ENCODE measurements at regions of chr10 and their contacts with region 1.

Region 1: DNA sequence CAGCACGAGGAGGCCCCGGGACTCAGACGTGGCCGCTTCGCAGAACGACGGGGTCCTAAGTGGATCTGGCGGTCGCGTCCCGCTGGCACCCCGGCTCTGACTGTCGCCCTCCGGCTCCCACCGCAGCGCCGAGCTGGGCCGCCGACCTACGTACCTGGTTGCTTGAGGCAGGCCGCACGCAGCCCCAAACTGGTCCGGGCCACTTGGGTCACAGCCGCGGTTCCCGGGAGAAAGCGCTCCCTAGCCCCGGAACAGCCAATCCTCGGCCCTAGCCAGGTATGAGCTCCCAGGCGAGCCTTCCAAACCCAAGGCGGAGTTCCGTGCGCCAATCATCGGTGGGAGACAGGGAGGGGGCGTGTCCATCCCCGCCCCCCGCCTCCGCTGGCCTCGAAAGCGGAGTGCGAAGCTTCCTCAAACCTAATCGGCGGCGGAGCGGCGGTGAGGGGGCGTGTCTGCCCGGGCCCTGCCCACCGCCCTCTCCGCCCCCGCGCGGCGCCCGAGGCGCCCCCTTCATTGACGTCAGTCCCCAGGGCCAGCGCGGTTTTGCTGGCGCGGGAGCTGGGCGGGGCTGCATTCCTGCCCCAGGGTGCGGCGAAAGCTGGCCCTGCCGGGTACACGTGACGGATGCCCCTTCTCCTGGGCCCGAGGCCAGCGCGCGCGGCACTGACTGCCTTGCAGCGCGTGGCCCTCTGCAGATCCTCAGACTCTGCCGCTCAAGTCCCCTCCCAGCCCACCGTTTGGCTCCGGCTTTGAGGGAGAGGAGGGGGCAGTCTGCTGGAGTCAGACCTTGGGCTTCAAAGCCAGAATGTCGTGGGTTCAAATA is at the start of gene AVPI1:
- DNase-seq: peak; percentile 92
- H3K4me3 Mint-ChIP-seq: peak within 1 kb of the TSS; percentile 78
- H3K27ac Mint-ChIP-seq: peak within 1 kb of the TSS; percentile 68
- H3K4me1 Mint-ChIP-seq: peaks cover 14% of the 10 kb centered on the region
- H3K27me3 Mint-ChIP-seq: peaks cover 14% of the 10 kb centered on the region
- total RNA-seq, gene AVPI1: 0.66 and 0.93 TPM in 2 replicates

Region 2: GRCh38 chr10:97648562-97649404 is 38.4 kb before region 1 on chr10:
- intact Hi-C with region 1: loop called (anchors 2 kb)
- DNase-seq: peak; percentile 24
- H3K4me3 Mint-ChIP-seq: peak overlapping the region; percentile 39
- H3K27ac Mint-ChIP-seq: peak overlapping the region; percentile 45
- H3K4me1 Mint-ChIP-seq: peaks cover 18% of the 10 kb centered on the region
- H3K27me3 Mint-ChIP-seq: no peaks in the 10 kb centered on the region

Region 3: GRCh38 chr10:97701438-97702069 is 14.4 kb after region 1 on chr10:
- intact Hi-C with region 1: no loop called
- DNase-seq: peak; percentile 34
- H3K4me3 Mint-ChIP-seq: no peak overlapping the region
- H3K27ac Mint-ChIP-seq: no peak overlapping the region
- H3K4me1 Mint-ChIP-seq: no peaks in the 10 kb centered on the region
- H3K27me3 Mint-ChIP-seq: peaks cover 8% of the 10 kb centered on the region

Region 4: DNA sequence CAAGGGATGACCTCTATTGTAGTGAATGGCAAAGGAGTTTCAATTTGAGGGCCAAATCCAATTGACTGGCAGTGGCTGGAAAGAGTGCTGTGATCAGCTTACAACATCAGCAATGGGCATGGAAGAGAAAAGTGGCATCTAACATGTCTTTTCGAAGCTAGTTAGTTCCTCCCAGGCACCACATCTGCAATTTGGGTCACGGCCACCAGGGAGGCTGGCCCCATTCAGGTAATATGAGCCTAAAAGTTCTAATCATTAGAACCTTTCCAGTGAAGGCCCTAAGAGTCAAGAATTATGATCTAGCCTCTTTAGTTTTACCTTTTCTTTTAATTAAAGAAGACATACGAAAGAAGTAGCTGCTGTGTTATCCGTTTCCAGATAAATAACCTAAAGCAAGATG is 325.9 kb after region 1 on chr10:
- intact Hi-C with region 1: no loop called
- DNase-seq: no peak
- H3K4me3 Mint-ChIP-seq: no peak overlapping the region
- H3K27ac Mint-ChIP-seq: no peak overlapping the region
- H3K4me1 Mint-ChIP-seq: no peaks in the 10 kb centered on the region
- H3K27me3 Mint-ChIP-seq: peaks cover 7% of the 10 kb centered on the region